Gastrocnemius medialis (tissue), 4 donors: ENCODE measurements at regions of chr19 and their contacts with region 1.

Region 1: DNA sequence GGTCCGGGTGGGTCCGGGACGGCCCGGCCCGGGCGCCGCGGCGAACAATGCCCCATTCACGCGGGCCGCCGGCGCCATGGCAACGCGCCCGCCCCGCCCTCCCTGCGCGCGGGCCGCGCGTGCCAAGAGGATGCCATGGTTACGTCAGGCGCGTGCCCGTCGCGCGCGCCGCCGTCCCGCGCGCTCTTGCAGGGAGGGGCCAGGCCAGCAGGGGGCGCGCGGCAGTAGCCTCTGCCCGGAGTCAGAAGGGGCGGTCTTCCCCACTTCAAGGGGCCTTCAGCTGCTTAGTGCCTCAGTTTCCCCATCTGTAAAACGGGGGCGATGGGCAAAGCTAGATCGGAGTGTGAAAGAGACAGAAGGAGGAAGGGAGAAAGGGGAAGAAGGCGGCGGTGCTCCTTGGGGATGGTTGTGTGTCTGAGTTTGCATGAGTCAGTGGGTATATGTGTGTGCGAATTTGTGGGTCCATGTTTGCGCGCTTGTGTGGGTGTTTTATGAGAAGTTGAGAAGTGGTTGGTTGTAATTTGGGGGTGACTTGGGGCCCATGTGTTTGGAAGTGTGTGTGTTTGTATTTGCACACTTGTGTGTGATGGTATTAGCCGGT is 11.6 kb upstream of the NFIX start:
- DNase-seq: peak in 1 of 2 donors; percentile 70
- ATAC-seq: peak; percentile 58 to 65
- H3K4me3 ChIP-seq: peak overlapping the region; percentile 28 to 38 (median 34)
- H3K27ac ChIP-seq: peak overlapping the region; percentile 78 to 87 (median 84)
- H3K4me1 ChIP-seq: peaks cover 18 to 20% of the 10 kb centered on the region in 2 donors
- H3K27me3 ChIP-seq: no peaks in the 10 kb centered on the region
- CTCF ChIP-seq: peak; percentile 90 to 100 (median 99)
- POLR2A ChIP-seq: no peak

Region 2: GRCh38 chr19:13033819-13034611 is 50.4 kb after region 1 on chr19:
- in situ Hi-C with region 1: loop called in 3 of 4 experiments (anchors 5 to 10 kb)
- intact Hi-C with region 1: loop called (anchors 1 kb)
- DNase-seq: peak; percentile 74 to 90
- ATAC-seq: peak; percentile 39 to 49
- H3K4me3 ChIP-seq: no peak overlapping the region
- H3K27ac ChIP-seq: peak overlapping the region; percentile 97 to 100 (median 99)
- H3K4me1 ChIP-seq: peaks cover 99% of the 10 kb centered on the region in 2 donors
- H3K27me3 ChIP-seq: no peaks in the 10 kb centered on the region
- CTCF ChIP-seq: peak; percentile 83 to 92 (median 87)
- POLR2A ChIP-seq: no peak

Region 3: DNA sequence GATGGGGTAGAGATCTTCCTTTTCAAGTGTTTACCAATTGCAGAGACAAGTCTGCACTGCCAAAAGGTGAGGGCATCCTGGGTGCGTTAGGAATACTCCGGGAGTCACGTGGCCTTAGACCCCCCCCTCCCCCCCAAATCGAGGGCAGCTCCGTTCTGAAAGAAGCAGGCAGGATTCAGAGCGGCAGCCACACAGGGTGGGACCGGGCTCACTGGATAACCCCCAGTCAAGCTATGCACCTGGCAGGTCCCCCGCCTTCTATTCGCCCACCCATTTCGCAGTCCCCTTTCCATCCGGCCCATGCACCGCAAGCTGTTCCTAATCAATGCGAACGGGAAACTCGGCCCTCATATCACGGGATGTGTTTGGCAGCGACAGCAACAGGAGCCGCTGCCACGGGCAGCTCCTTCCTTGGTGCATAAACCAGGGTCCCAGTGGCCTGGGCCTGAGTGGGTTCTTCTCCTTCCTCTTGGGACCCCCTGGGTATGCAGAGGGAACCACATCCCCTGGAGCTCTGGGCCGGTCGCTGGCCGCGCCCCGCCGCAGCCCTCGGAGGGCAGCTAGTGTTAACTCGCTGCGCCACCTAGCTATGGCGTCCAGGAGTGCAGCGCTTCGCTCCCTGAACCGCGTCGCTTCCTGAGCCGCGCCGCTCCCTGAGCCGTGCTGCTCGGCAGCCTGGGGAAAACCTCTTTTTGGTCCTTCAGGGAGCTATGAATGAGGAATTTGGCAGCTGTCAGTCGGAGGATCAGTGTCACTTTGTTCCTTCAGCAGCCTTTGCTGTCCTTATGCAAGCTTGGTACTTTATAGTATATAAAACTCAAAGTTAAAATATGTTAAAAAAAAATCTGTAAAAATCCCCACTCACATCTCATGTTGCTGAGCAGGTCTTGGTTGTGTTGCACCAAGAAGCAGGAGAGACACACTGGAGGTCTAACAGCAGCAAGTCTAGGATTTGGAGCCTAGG is 77.6 kb after region 1 on chr19:
- in situ Hi-C with region 1: no loop called
- intact Hi-C with region 1: loop called (anchors 1 kb)
- DNase-seq: peak; percentile 72 to 82
- ATAC-seq: peak; percentile 50 to 53
- H3K4me3 ChIP-seq: peak overlapping the region; percentile 29 to 59 (median 54)
- H3K27ac ChIP-seq: peak overlapping the region; percentile 92 to 100 (median 96)
- H3K4me1 ChIP-seq: peaks cover 95 to 96% of the 10 kb centered on the region in 2 donors
- H3K27me3 ChIP-seq: no peaks in the 10 kb centered on the region
- CTCF ChIP-seq: peak; percentile 88 to 99 (median 96)
- POLR2A ChIP-seq: no peak

Region 4: GRCh38 chr19:13093407-13094105 is 109.9 kb after region 1 on chr19:
- in situ Hi-C with region 1: loop called (anchors 5 to 10 kb)
- intact Hi-C with region 1: loop called (anchors 1 kb)
- DNase-seq: peak; percentile 60 to 83
- ATAC-seq: peak; percentile 73 to 82
- H3K4me3 ChIP-seq: no peak overlapping the region
- H3K27ac ChIP-seq: peak overlapping the region; percentile 66 to 78 (median 74)
- H3K4me1 ChIP-seq: peaks cover 15 to 26% of the 10 kb centered on the region in 2 donors
- H3K27me3 ChIP-seq: no peaks in the 10 kb centered on the region
- CTCF ChIP-seq: peak; percentile 94 to 99 (median 97)
- POLR2A ChIP-seq: no peak